ENCODE measurements at regions of chr11 and their contacts with region 1.

Region 1: DNA sequence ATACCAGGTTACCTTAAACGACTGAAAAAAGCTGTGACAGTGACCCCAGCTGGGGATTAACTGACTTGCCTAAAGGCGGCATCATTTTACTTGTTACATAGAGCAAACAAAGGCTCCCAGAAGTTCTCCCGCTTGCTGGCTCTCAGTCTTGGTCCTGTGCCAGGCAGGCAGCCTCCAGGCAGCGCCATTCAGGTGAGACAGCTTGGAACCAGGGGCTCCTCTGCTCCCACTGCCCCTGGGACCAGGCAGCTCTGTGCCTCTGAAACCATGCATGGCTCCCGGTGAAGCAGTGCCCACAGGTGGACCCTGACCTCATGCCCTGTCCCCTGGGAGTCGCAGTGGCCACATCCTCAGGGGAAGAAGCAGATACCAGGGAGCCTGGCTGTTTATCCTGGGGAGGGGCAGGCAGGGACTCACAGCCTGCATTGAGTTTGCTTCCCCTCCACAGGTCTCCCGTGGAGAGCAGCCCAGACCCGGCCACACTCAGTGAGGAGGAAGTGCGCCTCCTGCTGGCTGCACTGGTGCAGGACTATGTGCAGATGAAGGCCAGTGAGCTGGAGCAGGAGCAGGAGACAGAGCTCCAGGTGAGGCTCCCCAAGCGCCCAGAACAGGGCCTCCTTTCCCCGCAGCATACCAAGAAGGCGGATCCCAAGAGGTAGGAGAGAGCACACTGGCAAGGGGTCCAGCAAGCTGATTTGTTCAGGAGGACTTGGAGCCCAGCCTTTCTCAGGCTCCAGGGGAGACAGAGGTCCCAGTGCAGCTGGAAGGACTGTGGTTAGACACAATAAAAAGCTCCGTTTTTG is 15.6 kb upstream of the CYP2R1 start:
- DNase-seq: peak in 1 of 2 donors; percentile 46
- ATAC-seq: peak in 1 of 2 donors; percentile 66
- H3K4me3 ChIP-seq: no peak overlapping the region
- H3K27ac ChIP-seq: no peak overlapping the region
- H3K4me1 ChIP-seq: peaks cover 9% of the 10 kb centered on the region in 2 donors
- H3K27me3 ChIP-seq: peaks cover 0 to 12% (median 0%) of the 10 kb centered on the region in 3 donors
- CTCF ChIP-seq: peak; percentile 23 to 69 (median 49)
- POLR2A ChIP-seq: no peak

Region 2: GRCh38 chr11:14643697-14644225 is 263.9 kb before region 1 on chr11 and contains the start of gene PDE3B:
- in situ Hi-C with region 1: no loop called
- intact Hi-C with region 1: loop called (anchors 5 kb)
- DNase-seq: peak; percentile 24 to 30
- ATAC-seq: peak; percentile 61 to 65
- H3K4me3 ChIP-seq: peak within 1 kb of the TSS; percentile 61 to 72 (median 66)
- H3K27ac ChIP-seq: no peak within 1 kb of the TSS
- H3K4me1 ChIP-seq: no peaks in the 10 kb centered on the region
- H3K27me3 ChIP-seq: peaks cover 18 to 29% (median 26%) of the 10 kb centered on the region in 3 donors
- CTCF ChIP-seq: no peak
- POLR2A ChIP-seq: peak in 1 of 2 donors; percentile 12
- total RNA-seq, gene PDE3B: 0.39 to 1.1 (median 0.76) TPM

Region 3: DNA sequence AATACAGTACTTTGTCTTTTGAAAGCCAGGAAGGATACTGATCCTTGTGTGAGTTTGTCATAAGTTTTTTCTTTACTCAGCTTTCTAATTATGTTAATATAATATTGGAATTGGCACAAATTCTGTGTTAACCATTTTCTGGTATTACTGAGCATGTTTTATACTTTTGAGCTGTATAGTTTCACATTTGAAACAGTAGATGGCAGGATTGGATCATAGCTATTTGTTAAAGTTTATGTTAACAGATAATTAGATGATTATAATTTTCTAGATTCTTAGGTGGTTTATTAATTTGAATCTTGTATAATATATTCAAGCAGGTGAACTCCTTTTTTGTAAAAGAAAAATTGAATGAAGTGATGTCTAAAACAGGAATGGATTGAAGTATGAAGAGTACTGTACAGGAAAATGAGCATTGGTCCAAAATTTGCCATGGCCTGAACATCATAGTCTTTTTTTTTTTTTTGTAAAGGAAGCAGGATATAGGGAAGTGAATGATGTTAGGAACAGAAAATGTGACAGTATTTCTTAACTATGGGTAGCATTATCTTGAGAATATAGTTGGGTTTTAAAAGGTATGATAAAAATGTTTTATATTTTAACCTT is 117.6 kb before region 1 on chr11:
- in situ Hi-C with region 1: loop called in 3 of 4 experiments (anchors 25 kb)
- intact Hi-C with region 1: loop called (anchors 2 kb)
- DNase-seq: no peak
- ATAC-seq: no peak
- H3K4me3 ChIP-seq: no peak overlapping the region
- H3K27ac ChIP-seq: no peak overlapping the region
- H3K4me1 ChIP-seq: no peaks in the 10 kb centered on the region
- H3K27me3 ChIP-seq: no peaks in the 10 kb centered on the region
- CTCF ChIP-seq: peak in 3 of 5 experiments; percentile 19 to 50 (median 24)
- POLR2A ChIP-seq: no peak

Region 4: DNA sequence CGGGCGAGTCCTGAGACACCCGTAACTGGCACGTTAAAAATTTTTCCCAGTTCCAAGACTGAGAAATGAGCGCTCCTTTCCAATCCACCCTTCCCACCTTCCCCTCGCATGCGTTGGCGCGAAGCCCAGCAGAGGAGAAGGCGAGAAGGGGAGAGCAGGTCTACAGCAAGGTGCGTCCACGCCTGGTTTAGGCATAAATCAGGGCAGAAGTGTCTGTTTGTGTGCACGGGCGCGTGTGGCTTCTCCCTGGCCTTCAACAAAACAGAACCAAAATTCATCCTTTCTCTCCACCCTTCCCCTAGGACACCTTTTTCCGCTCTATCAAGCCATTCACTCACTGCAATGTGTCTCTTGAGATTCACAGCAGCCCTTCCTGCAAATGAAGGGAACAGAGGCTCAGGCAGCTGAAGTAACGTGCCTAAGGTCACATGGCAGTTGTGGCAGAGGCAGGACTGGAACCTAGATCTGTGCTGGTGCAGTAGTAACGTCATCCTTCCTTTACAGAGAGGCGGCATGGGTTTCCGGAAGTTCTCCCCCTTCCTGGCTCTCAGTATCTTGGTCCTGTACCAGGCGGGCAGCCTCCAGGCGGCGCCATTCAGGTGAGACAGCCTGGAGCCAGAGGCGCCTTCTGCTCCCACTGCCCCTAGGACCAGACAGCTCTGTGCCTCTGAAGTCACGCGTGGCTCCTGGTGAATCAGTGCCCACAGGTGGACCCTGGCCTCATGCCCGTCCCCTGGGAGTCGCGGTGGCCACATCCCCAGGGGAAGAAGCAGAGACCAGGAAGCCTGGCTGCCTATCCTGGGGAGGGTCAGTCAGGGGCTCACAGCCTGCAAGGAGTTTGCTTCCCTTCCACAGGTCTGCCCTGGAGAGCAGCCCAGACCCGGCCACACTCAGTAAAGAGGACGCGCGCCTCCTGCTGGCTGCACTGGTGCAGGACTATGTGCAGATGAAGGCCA is 166.9 kb after region 1 on chr11:
- in situ Hi-C with region 1: loop called in 1 of 4 experiments (anchors 25 kb)
- intact Hi-C with region 1: loop called (anchors 1 kb)
- DNase-seq: peak; percentile 26 to 58
- ATAC-seq: peak in 1 of 2 donors; percentile 75
- H3K4me3 ChIP-seq: peak overlapping the region in 2 of 4 donors; percentile 18 to 34
- H3K27ac ChIP-seq: no peak overlapping the region
- H3K4me1 ChIP-seq: peaks cover 4 to 18% of the 10 kb centered on the region in 2 donors
- H3K27me3 ChIP-seq: peaks cover 28 to 38% (median 31%) of the 10 kb centered on the region in 3 donors
- CTCF ChIP-seq: peak in 4 of 5 experiments; percentile 47 to 76 (median 64)
- POLR2A ChIP-seq: no peak

Region 5: GRCh38 chr11:15208378-15209222 is 301.0 kb after region 1 on chr11:
- in situ Hi-C with region 1: no loop called
- intact Hi-C with region 1: loop called (anchors 1 kb)
- DNase-seq: peak; percentile 38 to 39
- ATAC-seq: peak; percentile 56 to 68
- H3K4me3 ChIP-seq: no peak overlapping the region
- H3K27ac ChIP-seq: no peak overlapping the region
- H3K4me1 ChIP-seq: no peaks in the 10 kb centered on the region
- H3K27me3 ChIP-seq: no peaks in the 10 kb centered on the region
- CTCF ChIP-seq: peak; percentile 71 to 91 (median 87)
- POLR2A ChIP-seq: no peak